ENCODE measurements at regions of chr17 and their contacts with region 1.

Region 1: DNA sequence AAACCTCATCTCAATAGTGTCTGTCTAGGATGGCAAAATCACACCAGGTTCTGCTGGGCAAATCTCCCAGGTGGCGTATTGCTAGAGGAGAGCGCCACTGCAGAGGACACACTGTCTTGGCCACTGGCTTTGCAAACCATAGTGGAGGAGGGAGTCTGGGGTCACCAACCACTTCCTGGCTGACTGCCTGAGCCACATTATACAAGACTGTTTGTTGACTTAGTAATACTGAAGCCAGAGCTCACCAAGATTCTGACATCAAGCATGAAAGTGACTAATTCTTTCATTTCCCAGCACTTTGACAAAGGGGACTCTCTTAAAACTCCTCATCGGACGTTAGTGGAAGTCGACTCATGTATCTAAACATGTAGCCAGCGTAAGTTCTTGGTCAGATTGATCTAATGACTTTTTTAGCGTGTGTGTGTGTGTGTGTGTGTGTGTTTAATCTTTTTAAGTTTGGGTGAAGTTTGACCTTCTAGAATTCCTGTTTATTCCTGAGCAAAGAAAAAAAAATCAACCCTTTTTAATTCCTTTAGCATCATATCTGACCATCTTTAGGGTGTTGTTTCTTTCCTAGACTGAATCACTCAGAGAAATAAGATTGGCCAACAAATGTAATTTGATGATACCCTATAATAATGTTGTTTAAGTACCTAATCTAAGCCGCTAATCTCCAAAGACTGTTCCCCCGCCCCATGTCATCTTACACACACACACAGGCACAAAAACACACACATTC is 13.7 kb downstream of the PITPNC1 start:
- DNase-seq: peak; percentile 42 to 83
- ATAC-seq: peak; percentile 80
- H3K4me3 ChIP-seq: no peak overlapping the region
- H3K27ac ChIP-seq: peak overlapping the region; percentile 54 to 68; a peak in 5 of 6 replicates
- H3K4me1 ChIP-seq: peaks cover 19% of the 10 kb centered on the region
- CTCF ChIP-seq: no peak
- EP300 ChIP-seq: peak in 1 of 2 experiments; percentile 54; a peak in 1 of 5 replicates
- POLR2A ChIP-seq: no peak
- RAD21 ChIP-seq: no peak; a peak in 1 of 5 replicates

Region 2: DNA sequence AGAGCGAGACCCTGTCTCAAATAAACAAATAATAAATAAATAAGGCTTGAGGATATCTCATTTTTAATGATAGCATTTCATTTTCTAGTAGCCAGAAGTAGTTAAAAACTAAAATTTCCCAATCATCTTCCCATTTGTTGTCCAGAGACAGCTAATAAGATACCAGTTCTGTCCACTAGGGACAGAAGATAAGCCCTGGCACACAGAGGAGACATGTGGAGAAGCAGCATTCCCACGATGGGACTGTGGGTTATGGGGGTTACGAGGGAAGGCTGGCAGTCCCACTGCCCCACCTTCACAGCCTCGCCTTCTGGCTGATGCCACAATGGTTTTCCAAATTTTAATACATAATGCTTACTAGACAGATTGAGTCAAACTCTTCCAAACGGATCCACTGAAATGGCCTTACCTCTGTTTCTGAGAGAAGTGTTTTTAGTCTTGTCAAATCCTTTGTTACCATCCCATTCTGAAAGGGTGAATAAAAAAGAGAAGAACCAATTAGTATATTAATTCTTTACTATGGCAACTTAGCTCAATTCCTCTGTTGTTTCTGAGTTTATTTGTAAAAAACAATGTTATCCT is 190.0 kb before region 1 on chr17:
- CTCF ChIA-PET with region 1: no interaction called
- POLR2A ChIA-PET with region 1: no interaction called
- DNase-seq: peak; percentile 42 to 58
- ATAC-seq: peak; percentile 85 to 89; a peak in 5 of 6 replicates
- H3K4me3 ChIP-seq: no peak overlapping the region
- H3K27ac ChIP-seq: no peak overlapping the region
- H3K4me1 ChIP-seq: no peaks in the 10 kb centered on the region
- CTCF ChIP-seq: peak; percentile 33
- EP300 ChIP-seq: no peak
- POLR2A ChIP-seq: no peak
- RAD21 ChIP-seq: no peak

Region 3: DNA sequence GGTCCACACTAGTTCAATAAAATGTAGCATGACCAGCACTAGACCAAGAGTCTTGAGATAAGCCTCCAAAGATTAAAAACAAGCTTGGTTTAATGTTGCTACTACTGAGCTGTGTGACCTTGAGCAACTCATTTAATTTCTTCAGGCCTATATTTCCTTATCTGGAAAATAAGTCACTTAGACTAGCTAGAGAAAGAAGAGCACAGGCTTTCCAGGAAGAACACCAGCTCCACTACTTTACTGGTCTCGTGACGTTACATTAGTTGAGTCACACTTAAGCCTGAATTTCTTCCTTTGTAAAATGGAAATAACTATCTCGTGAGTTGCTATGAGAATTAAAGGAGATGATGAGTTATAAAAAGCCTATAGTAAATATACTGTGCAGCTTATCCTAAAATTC is 151.2 kb before region 1 on chr17:
- CTCF ChIA-PET with region 1: no interaction called
- POLR2A ChIA-PET with region 1: no interaction called
- DNase-seq: no peak
- ATAC-seq: no peak
- H3K4me3 ChIP-seq: no peak overlapping the region
- H3K27ac ChIP-seq: no peak overlapping the region
- H3K4me1 ChIP-seq: peaks cover 18% of the 10 kb centered on the region
- CTCF ChIP-seq: no peak
- EP300 ChIP-seq: no peak
- POLR2A ChIP-seq: no peak
- RAD21 ChIP-seq: no peak

Region 4: DNA sequence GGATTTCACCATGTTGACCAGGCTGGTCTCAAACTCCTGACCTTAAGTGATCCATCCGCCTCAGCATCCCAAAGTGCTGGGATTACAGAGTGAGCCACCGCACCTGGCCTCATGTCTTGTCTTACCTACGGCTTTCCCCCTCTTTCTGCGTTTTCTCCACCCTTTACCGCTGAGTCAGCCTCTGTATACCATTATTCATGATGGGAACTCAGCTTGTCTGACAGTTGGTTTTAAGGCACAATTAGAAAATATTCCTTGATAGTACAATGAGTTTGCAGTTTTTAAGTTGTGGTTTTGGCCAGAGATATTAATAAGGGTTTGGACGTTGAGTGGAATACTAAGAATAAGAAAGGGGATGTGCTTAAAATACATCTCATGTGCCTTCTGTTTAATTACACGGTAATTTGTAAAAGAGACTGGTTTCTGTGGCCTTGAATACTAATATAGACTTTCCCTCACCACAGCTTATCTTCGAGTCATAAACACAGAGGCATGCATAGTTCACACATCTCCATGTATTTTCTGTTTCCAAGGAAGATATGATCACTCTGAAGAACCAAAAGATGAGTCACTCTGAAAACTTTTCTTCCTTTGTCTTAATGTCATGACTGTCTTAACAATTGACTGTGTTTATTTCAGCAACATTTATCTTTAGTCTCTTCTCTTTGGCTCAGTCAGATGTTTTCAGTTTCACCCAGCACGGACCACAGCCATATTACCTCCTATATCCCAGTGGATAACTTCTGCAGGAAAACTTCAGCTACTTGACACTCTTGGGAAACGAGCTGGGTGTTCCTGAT is 40.6 kb after region 1 on chr17:
- CTCF ChIA-PET with region 1: interaction called, 11 read pairs
- POLR2A ChIA-PET with region 1: no interaction called
- DNase-seq: peak; percentile 45 to 61
- ATAC-seq: peak; percentile 72 to 80; a peak in 5 of 6 replicates
- H3K4me3 ChIP-seq: no peak overlapping the region
- H3K27ac ChIP-seq: peak overlapping the region in 1 of 2 experiments; percentile 58; a peak in 4 of 6 replicates
- H3K4me1 ChIP-seq: peaks cover 10% of the 10 kb centered on the region
- CTCF ChIP-seq: no peak
- EP300 ChIP-seq: no peak
- POLR2A ChIP-seq: no peak
- RAD21 ChIP-seq: no peak

Region 5: GRCh38 chr17:67469208-67469895 is 78.5 kb after region 1 on chr17:
- CTCF ChIA-PET with region 1: interaction called, 185 read pairs
- POLR2A ChIA-PET with region 1: no interaction called
- DNase-seq: no peak
- ATAC-seq: peak in 1 of 2 experiments; percentile 23; a peak in 3 of 6 replicates
- H3K4me3 ChIP-seq: no peak overlapping the region
- H3K27ac ChIP-seq: no peak overlapping the region
- H3K4me1 ChIP-seq: no peaks in the 10 kb centered on the region
- CTCF ChIP-seq: no peak
- EP300 ChIP-seq: no peak
- POLR2A ChIP-seq: no peak
- RAD21 ChIP-seq: no peak

Region 6: DNA sequence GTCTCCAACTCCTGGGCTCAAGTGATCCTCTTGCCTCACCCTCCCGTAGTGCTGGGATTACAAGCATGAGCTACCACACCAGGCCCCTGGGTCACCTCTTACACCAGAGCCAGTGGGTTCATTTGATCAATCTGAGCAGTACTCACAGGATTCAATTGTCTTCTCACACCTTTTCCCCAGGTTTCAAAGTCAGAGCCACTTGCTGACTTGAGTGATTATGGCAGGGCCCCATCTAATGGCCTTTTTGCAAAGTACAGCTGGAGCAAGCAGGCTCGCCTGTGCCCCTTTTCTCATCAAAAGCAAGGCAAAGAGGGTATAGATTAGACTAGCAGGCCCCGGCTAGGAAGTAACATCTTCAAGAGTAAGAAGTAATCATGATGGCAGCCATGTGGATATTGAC is 212.1 kb after region 1 on chr17:
- CTCF ChIA-PET with region 1: interaction called, 18 read pairs
- POLR2A ChIA-PET with region 1: no interaction called
- DNase-seq: peak; percentile 58 to 61
- ATAC-seq: peak; percentile 69 to 78; a peak in 5 of 6 replicates
- H3K4me3 ChIP-seq: no peak overlapping the region
- H3K27ac ChIP-seq: no peak overlapping the region
- H3K4me1 ChIP-seq: no peaks in the 10 kb centered on the region
- CTCF ChIP-seq: peak; percentile 38; the same call in 2 of the 3 replicates
- EP300 ChIP-seq: no peak
- POLR2A ChIP-seq: no peak
- RAD21 ChIP-seq: peak; percentile 58 to 72

Measured in A549 (cell line).